MCF 10A (cell line): ENCODE measurements at regions of chr9 and their contacts with region 1.

Region 1: GRCh38 chr9:97386733-97387503 is 25.0 kb upstream of the TDRD7 start:
- DNase-seq: peak; percentile 73
- H3K4me3 Mint-ChIP-seq: no peak overlapping the region
- H3K27ac Mint-ChIP-seq: no peak overlapping the region
- H3K4me1 Mint-ChIP-seq: no peaks in the 10 kb centered on the region
- H3K27me3 Mint-ChIP-seq: no peaks in the 10 kb centered on the region
- CTCF ChIP-seq: peak; percentile 98

Region 2: DNA sequence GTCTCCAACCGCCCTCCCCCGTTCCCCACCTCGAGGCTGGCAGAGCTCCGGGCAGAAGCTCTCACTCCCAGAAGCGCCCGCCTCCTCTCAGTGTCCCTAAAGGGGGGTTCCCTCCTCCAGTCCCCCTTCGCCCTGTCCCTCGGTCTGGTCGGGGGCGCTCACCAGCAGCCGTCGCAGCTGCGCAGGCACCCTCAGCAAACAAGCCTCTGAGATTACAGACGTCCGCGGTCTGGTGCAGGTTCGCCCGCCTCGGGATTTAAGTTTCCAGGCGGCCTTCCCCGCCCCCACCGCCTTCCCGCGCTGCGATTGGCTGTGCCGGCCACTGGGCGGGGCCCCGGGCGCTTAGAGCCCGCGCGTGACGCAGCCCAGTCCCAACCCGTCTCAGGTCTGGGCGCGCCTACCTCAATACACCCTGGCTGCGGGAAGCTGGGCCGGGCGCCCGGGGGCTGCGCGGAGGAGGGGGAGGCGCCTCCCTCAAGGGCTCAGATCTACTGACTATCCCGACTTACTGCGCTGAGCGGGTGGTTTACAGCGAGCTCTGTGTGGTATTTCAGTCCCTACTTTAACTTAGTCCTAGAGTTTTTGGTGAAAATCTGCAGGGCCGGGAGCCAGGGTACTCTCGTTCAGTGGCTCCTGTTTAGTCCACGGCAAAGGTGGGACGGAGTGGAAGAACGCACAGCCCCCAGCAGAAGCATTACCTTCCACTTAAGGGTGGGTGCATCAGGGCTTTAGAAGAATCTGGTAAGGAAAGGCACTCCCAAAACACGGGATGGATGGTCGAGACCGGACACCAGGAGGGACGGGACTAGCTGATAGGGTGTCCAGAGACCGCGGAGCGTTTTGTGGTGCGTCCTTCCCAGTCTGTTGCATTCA is 347.8 kb before region 1 on chr9 and contains the start of gene CTSV:
- CTCF ChIA-PET with region 1: no interaction called
- POLR2A ChIA-PET with region 1: no interaction called
- intact Hi-C with region 1: no loop called
- DNase-seq: peak; percentile 87
- H3K4me3 Mint-ChIP-seq: peak within 1 kb of the TSS; percentile 86
- H3K27ac Mint-ChIP-seq: peak within 1 kb of the TSS; percentile 49
- H3K4me1 Mint-ChIP-seq: no peaks in the 10 kb centered on the region
- H3K27me3 Mint-ChIP-seq: no peaks in the 10 kb centered on the region
- CTCF ChIP-seq: no peak
- total RNA-seq, gene CTSV: 1.9 and 2.8 TPM in 2 replicates

Region 3: DNA sequence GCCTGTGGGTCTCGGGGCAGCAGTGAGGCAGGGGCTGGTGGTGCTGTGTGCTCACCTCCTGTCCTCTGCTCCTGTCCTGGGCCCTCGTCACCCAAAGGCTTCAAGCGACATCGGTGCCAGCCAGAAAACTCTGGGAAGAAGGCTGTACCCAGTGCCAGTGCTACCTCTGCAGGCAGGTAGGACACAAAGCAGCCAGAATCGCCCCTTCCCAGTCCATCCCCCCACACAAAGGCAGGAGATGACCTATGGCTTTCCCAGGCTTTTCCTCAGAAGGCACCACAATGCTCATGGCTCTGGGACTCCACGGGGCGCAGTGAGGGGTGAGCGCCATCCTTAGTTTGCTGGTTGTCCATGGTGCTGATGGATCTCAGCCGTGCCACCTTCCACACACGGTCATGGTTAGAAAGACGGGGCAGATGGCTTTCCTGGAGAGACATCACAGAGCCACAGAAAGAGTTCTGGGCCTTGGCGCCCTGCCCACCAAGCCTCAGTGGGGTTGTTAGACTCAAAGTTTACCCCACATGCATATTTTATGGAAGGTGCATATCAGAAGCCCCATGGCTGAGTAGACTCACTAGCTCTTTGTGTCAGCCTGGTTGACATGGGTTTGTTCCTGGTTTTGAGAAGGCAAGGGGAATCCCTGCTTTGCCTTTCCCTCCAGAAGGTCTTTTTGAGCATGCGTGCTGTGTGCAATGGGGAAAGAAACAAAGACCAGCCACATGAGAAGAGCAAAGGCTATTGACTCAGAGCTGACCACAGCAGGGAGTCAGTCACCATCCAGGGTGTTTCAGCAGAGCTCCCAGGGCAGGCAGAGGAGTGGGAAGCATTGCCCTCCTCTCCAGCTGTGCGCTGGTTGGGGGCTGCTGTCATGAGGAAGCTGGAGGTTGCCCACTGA is 24.4 kb before region 1 on chr9:
- CTCF ChIA-PET with region 1: interaction called, 12 read pairs
- POLR2A ChIA-PET with region 1: no interaction called
- intact Hi-C with region 1: no loop called
- DNase-seq: no peak
- H3K4me3 Mint-ChIP-seq: no peak overlapping the region
- H3K27ac Mint-ChIP-seq: no peak overlapping the region
- H3K4me1 Mint-ChIP-seq: peaks cover 5% of the 10 kb centered on the region
- H3K27me3 Mint-ChIP-seq: no peaks in the 10 kb centered on the region
- CTCF ChIP-seq: no peak

Region 4: GRCh38 chr9:97398999-97399758 is 12.3 kb after region 1 on chr9:
- CTCF ChIA-PET with region 1: interaction called, 50 read pairs
- POLR2A ChIA-PET with region 1: interaction called, 3 read pairs
- intact Hi-C with region 1: no loop called
- DNase-seq: peak; percentile 87
- H3K4me3 Mint-ChIP-seq: no peak overlapping the region
- H3K27ac Mint-ChIP-seq: no peak overlapping the region
- H3K4me1 Mint-ChIP-seq: peaks cover 6% of the 10 kb centered on the region
- H3K27me3 Mint-ChIP-seq: no peaks in the 10 kb centered on the region
- CTCF ChIP-seq: peak; percentile 92